MCF 10A (cell line): ENCODE measurements at regions of chr9 and their contacts with region 1.

Region 1: DNA sequence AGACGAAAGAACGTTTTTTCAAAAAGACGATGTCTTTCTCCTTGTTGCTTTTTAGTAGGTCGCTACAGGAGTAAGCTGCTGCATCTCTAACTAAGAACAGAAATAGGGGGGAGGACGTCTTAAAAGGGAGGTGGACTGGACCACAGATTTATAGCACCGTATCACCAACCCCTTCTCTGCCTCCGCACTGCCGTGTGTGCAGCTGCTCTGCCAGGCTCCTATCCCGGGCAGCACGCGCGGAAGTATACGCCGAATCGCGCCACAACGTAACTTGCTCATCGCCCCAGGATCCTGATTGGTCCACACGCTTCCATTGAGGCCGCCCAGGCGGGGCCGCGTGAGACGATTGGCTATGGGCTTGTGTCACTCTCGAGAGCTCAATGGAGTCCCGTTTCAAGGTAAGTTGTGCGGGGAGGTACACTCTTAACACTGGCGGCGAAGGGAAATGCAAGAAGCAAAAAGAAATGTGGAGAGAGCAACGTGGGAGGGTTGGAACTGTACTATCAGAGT is at the start of gene ELAVL2:
- DNase-seq: peak; percentile 95
- H3K4me3 Mint-ChIP-seq: no peak within 1 kb of the TSS
- H3K27ac Mint-ChIP-seq: no peak within 1 kb of the TSS
- H3K4me1 Mint-ChIP-seq: no peaks in the 10 kb centered on the region
- H3K27me3 Mint-ChIP-seq: peaks cover 16% of the 10 kb centered on the region
- CTCF ChIP-seq: no peak
- total RNA-seq, gene ELAVL2: 1.6 and 6.0 TPM in 2 replicates

Region 2: GRCh38 chr9:23492126-23493002 is 333.8 kb before region 1 on chr9:
- CTCF ChIA-PET with region 1: no interaction called
- POLR2A ChIA-PET with region 1: no interaction called
- intact Hi-C with region 1: loop called (anchors 10 kb)
- DNase-seq: peak; percentile 58
- H3K4me3 Mint-ChIP-seq: no peak overlapping the region
- H3K27ac Mint-ChIP-seq: no peak overlapping the region
- H3K4me1 Mint-ChIP-seq: no peaks in the 10 kb centered on the region
- H3K27me3 Mint-ChIP-seq: peaks cover 19% of the 10 kb centered on the region
- CTCF ChIP-seq: peak; percentile 37

Region 3: DNA sequence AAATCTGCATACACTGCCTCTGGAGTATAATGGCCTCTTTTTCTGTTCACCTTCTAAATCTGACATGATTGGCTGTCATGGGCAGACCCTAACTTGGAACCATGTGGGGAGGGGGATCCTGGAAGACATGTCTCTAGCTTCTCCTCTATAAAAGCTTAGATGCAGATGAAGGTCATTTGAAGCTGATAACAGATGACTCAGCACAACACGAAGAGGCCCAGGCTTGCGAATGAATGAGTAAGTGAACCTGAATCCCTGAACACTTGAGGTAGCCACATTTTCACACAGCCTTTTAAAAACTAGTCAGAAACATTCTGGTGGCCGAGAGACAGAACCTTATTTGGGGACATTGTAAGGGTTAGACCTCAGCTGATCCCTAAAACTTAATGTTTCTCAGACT is 282.8 kb before region 1 on chr9:
- CTCF ChIA-PET with region 1: interaction called, 3 read pairs
- POLR2A ChIA-PET with region 1: no interaction called
- intact Hi-C with region 1: loop called (anchors 10 kb)
- DNase-seq: no peak
- H3K4me3 Mint-ChIP-seq: no peak overlapping the region
- H3K27ac Mint-ChIP-seq: no peak overlapping the region
- H3K4me1 Mint-ChIP-seq: peaks cover 6% of the 10 kb centered on the region
- H3K27me3 Mint-ChIP-seq: no peaks in the 10 kb centered on the region
- CTCF ChIP-seq: no peak

Region 4: GRCh38 chr9:23682891-23683431 is 143.2 kb before region 1 on chr9:
- CTCF ChIA-PET with region 1: interaction called, 3 read pairs
- POLR2A ChIA-PET with region 1: interaction called, 8 read pairs
- intact Hi-C with region 1: loop called (anchors 10 kb)
- DNase-seq: peak; percentile 34
- H3K4me3 Mint-ChIP-seq: peak overlapping the region; percentile 3
- H3K27ac Mint-ChIP-seq: peak overlapping the region; percentile 68
- H3K4me1 Mint-ChIP-seq: peaks cover 25% of the 10 kb centered on the region
- H3K27me3 Mint-ChIP-seq: no peaks in the 10 kb centered on the region
- CTCF ChIP-seq: no peak

Region 5: GRCh38 chr9:23769307-23769935 is 56.8 kb before region 1 on chr9:
- CTCF ChIA-PET with region 1: interaction called, 3 read pairs
- POLR2A ChIA-PET with region 1: interaction called, 39 read pairs
- intact Hi-C with region 1: loop called (anchors 2 kb)
- DNase-seq: peak; percentile 93
- H3K4me3 Mint-ChIP-seq: peak overlapping the region; percentile 59
- H3K27ac Mint-ChIP-seq: peak overlapping the region; percentile 91
- H3K4me1 Mint-ChIP-seq: peaks cover 48% of the 10 kb centered on the region
- H3K27me3 Mint-ChIP-seq: no peaks in the 10 kb centered on the region
- CTCF ChIP-seq: no peak

Region 6: GRCh38 chr9:23811633-23812032 is 14.5 kb before region 1 on chr9:
- CTCF ChIA-PET with region 1: no interaction called
- POLR2A ChIA-PET with region 1: interaction called, 11 read pairs
- intact Hi-C with region 1: no loop called
- DNase-seq: peak; percentile 12
- H3K4me3 Mint-ChIP-seq: no peak overlapping the region
- H3K27ac Mint-ChIP-seq: peak overlapping the region; percentile 77
- H3K4me1 Mint-ChIP-seq: peaks cover 8% of the 10 kb centered on the region
- H3K27me3 Mint-ChIP-seq: no peaks in the 10 kb centered on the region
- CTCF ChIP-seq: no peak

Region 7: GRCh38 chr9:23858234-23858633 is 32.1 kb after region 1 on chr9:
- CTCF ChIA-PET with region 1: no interaction called
- POLR2A ChIA-PET with region 1: no interaction called
- intact Hi-C with region 1: no loop called
- DNase-seq: no peak
- H3K4me3 Mint-ChIP-seq: no peak overlapping the region
- H3K27ac Mint-ChIP-seq: no peak overlapping the region
- H3K4me1 Mint-ChIP-seq: no peaks in the 10 kb centered on the region
- H3K27me3 Mint-ChIP-seq: peaks cover 41% of the 10 kb centered on the region
- CTCF ChIP-seq: no peak

Region 8: DNA sequence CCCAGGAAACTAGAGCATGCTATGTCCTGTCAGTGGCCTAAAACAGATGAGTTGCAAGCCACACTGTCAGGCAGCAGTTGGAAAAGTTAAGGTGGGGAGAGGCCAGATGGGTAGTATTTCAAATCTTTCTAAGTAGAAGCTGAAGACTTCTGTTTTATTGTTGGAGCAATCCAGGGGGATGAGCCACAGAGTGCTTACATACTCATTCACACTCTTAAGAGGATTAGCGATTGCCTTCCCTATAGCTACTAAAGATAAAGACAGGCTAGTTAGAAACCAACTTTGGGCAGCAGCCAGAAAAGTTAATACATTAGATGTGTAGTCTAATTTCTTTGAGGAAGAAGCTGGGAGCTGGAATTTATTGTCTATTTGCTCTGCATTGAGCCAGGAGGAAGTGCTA is 61.6 kb after region 1 on chr9:
- CTCF ChIA-PET with region 1: no interaction called
- POLR2A ChIA-PET with region 1: no interaction called
- intact Hi-C with region 1: no loop called
- DNase-seq: no peak
- H3K4me3 Mint-ChIP-seq: no peak overlapping the region
- H3K27ac Mint-ChIP-seq: no peak overlapping the region
- H3K4me1 Mint-ChIP-seq: no peaks in the 10 kb centered on the region
- H3K27me3 Mint-ChIP-seq: peaks cover 71% of the 10 kb centered on the region
- CTCF ChIP-seq: no peak

Region 9: GRCh38 chr9:25678162-25678666 is 1852.0 kb after region 1 on chr9 and contains the start of gene TUSC1:
- CTCF ChIA-PET with region 1: no interaction called
- POLR2A ChIA-PET with region 1: no interaction called
- intact Hi-C with region 1: loop called (anchors 10 kb)
- DNase-seq: peak; percentile 90
- H3K4me3 Mint-ChIP-seq: peak within 1 kb of the TSS; percentile 83
- H3K27ac Mint-ChIP-seq: peak within 1 kb of the TSS; percentile 93
- H3K4me1 Mint-ChIP-seq: peaks cover 10% of the 10 kb centered on the region
- H3K27me3 Mint-ChIP-seq: no peaks in the 10 kb centered on the region
- CTCF ChIP-seq: no peak
- total RNA-seq, gene TUSC1: 10.3 and 12.4 TPM in 2 replicates